HepG2 (cell line): ENCODE measurements at regions of chr5 and their contacts with region 1.

Region 1: DNA sequence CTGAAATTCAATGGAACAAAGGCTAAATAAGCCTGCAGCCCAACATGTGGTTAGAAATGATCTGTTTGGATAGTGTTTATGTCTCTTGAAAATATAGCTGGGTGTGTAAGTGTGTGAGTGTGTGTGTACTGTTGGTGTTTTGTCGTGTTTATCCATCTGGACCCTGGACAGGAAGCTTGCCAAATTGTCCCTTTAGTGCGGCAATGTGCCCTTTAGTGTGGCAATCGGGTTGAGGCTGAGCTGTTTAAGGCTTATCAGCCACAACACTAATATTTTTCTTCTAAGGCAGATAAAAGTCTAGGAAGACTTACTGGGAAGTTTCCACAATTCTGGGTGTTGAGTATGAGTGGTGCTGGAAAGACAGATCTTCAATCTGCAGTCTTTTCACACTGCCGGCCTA is 180.2 kb downstream of the YTHDC2 start:
- DNase-seq: no peak
- ATAC-seq: no peak; the same call in 2 of the 3 replicates
- H3K4me3 ChIP-seq: no peak overlapping the region
- H3K27ac ChIP-seq: no peak overlapping the region
- H3K4me1 ChIP-seq: no peaks in the 10 kb centered on the region
- H3K27me3 ChIP-seq: 0 out of 5 replicates have a peak, but pooled peaks cover 0 to 3% of the 10 kb centered on the region in 2 experiments
- CTCF ChIP-seq: no peak
- EP300 ChIP-seq: no peak
- POLR2A ChIP-seq: no peak
- RAD21 ChIP-seq: no peak

Region 2: GRCh38 chr5:113660206-113660605 is 33.5 kb before region 1 on chr5:
- CTCF ChIA-PET with region 1: no interaction called
- POLR2A ChIA-PET with region 1: no interaction called
- in situ Hi-C with region 1: no loop called
- intact Hi-C with region 1: no loop called
- DNase-seq: no peak
- ATAC-seq: no peak
- H3K4me3 ChIP-seq: no peak overlapping the region
- H3K27ac ChIP-seq: no peak overlapping the region
- H3K4me1 ChIP-seq: no peaks in the 10 kb centered on the region
- H3K27me3 ChIP-seq: no peaks in the 10 kb centered on the region; a peak in 1 of 5 replicates
- CTCF ChIP-seq: no peak
- EP300 ChIP-seq: no peak
- POLR2A ChIP-seq: no peak
- RAD21 ChIP-seq: no peak

Region 3: GRCh38 chr5:113721171-113721570 is 27.5 kb after region 1 on chr5:
- CTCF ChIA-PET with region 1: no interaction called
- POLR2A ChIA-PET with region 1: no interaction called
- in situ Hi-C with region 1: no loop called
- intact Hi-C with region 1: loop called (anchors 2 kb)
- DNase-seq: no peak
- ATAC-seq: no peak
- H3K4me3 ChIP-seq: no peak overlapping the region
- H3K27ac ChIP-seq: no peak overlapping the region
- H3K4me1 ChIP-seq: no peaks in the 10 kb centered on the region
- H3K27me3 ChIP-seq: no peaks in the 10 kb centered on the region
- CTCF ChIP-seq: no peak
- EP300 ChIP-seq: no peak
- POLR2A ChIP-seq: no peak
- RAD21 ChIP-seq: no peak